Right cardiac atrium (tissue), 5 donors: ENCODE measurements at regions of chr2 and their contacts with region 1.

Region 1: DNA sequence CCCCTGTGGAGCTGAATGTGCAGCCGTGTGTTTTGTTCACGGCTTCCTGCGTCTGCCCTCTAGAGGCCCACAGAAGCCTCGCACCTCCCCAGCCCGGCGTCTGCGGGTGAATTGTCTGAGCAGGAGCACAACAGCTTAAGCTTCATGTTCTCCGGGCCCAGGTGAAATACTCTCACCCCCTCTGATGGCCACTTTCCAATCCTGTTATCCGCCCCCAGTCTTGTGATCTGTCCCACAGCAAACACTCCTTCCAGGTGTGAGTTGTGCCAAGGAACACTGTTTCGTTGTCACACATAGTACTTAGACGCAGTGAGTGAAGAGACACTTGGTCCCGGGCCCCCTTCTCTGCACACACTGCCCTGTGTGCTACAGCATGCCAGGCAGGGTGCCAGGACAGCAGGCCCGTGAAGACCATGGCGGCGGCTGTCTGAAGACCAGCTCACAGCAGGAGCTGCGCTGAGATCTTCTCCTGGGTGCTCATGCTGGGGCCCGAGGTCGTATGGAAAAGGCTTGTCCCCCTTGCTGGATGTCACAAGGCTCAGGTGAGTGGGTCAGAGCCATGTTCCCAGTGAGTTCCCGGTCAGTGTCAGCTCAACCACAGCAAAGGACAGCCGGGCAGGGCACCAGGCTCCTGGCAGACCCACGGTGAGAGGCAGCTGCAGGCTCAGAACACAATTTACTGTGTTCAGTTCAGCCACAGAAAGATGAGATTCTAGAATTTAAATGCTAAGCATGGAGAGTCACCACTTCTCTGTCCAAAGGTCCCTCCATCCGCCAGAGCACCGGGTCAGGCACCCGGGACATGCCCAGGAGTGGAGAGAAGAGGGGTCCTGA is 6.8 kb upstream of the PXDN start:
- DNase-seq: peak; percentile 71 to 88 (median 88)
- ATAC-seq: peak; percentile 80 to 83
- H3K4me3 ChIP-seq: no peak overlapping the region
- H3K27ac ChIP-seq: no peak overlapping the region
- H3K4me1 ChIP-seq: no peaks in the 10 kb centered on the region
- H3K27me3 ChIP-seq: no peaks in the 10 kb centered on the region

Region 2: DNA sequence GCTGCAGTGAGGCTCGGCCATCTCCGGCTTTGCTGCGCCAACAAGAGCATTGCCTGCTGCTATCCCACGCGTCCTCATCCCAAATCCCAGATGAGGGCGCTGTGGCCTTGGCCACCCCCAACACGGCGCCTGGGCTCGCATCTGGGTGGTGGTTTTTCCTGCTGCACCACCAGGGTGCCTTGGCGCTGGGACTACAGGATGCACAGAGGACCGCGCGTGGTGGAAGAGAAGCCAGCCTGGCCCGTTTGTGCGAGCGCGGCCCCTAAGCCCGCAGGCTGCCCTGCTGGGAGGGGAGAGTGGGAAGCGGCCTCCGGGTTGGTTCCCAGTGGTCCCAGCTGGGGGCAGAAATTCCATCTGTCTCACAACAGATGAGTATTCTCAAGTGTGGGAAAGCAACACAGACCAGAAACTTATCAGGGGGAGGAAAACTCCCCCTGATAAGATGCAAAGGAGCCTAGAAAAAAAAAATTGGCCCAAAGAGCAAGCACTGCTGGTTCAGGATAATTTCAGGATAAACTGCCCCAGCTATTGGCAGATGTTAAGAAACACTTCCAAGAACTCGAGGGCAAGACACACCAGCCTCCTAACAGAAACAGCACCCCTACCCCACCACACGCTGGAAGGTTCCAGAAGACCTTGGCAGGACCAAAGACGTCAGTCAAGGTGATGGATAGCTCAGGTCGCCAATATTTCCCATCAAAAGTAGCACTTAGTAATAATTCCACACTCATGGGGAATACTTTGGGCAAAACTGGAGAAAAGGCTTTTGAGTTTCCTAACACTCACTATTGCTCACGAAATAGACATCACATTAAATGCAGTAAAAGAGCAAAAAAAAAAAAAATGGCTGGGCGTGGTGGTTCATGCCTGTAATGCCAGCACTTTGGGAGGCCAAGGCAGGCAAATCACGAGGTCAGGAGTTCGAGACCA is 158.9 kb before region 1 on chr2:
- intact Hi-C with region 1: loop called in 2 of 4 experiments (anchors 5 kb)
- DNase-seq: peak; percentile 86 to 94 (median 93)
- ATAC-seq: peak; percentile 88 to 89
- H3K4me3 ChIP-seq: no peak overlapping the region
- H3K27ac ChIP-seq: peak overlapping the region; percentile 6
- H3K4me1 ChIP-seq: peaks cover 4% of the 10 kb centered on the region
- H3K27me3 ChIP-seq: no peaks in the 10 kb centered on the region